CD8-positive, alpha-beta memory T cell (primary cell): ENCODE measurements at regions of chr7 and their contacts with region 1.

Region 1: DNA sequence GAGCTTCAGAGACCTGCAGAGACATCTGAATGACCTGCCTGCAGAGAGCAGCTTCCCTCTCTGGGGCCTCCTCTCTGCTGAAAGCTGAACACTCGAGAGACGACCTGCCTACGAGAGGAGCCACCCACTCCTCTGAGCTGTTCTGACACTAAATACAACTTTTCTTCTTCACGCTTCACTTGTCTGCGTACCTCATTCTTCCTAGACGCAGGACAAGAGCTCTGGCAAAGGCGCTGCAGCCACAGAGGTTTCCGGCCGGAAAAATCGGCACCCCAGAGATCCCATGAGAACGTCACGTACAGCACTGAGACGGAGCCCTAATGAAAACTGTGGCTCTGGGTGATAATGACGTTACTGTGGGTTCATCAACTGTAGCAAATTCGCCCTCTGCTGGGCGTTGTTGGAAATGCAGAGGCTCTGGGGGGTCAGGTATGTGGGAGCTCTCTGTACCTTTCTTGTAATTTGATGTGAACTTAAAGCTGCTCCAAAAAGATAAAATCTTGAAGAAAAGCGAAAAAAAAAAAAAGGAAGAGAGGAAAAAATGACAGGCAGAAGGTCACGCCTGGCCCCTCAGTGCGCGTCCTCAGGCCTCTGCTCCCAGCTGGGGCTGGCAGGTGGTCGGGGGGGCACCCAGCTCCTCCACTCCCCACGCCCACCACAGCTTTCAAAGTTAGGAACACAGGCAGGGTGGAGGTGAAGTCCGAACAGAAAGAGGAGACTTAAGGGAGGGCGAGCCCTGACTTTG is 120.7 kb downstream of the DYNC2I1 start:
- DNase-seq: peak; percentile 81 to 89 (median 84)
- H3K4me3 ChIP-seq: peak overlapping the region; percentile 82
- H3K4me3 Mint-ChIP-seq: peak overlapping the region; percentile 58 to 94 (median 87)
- H3K27ac ChIP-seq: peak overlapping the region; percentile 25
- H3K27ac Mint-ChIP-seq: peak overlapping the region; percentile 22 to 96 (median 88)
- H3K4me1 ChIP-seq: peaks cover 18% of the 10 kb centered on the region
- H3K4me1 Mint-ChIP-seq: peaks cover 15 to 26% (median 21%) of the 10 kb centered on the region in 3 donors
- H3K27me3 ChIP-seq: no peaks in the 10 kb centered on the region
- H3K27me3 Mint-ChIP-seq: no peaks in the 10 kb centered on the region

Region 2: GRCh38 chr7:158695726-158696452 is 281.1 kb before region 1 on chr7:
- CTCF ChIA-PET with region 1: interaction called, 45 read pairs
- POLR2A ChIA-PET with region 1: interaction called, 3 read pairs
- DNase-seq: peak; percentile 12 to 61 (median 33)
- H3K4me3 ChIP-seq: no peak overlapping the region
- H3K4me3 Mint-ChIP-seq: peak overlapping the region in 2 of 7 donors; percentile 44 to 82
- H3K27ac ChIP-seq: no peak overlapping the region
- H3K27ac Mint-ChIP-seq: peak overlapping the region in 5 of 8 donors; percentile 17 to 87 (median 46)
- H3K4me1 ChIP-seq: no peaks in the 10 kb centered on the region
- H3K4me1 Mint-ChIP-seq: peaks cover 3 to 24% (median 15%) of the 10 kb centered on the region in 3 donors
- H3K27me3 ChIP-seq: no peaks in the 10 kb centered on the region
- H3K27me3 Mint-ChIP-seq: no peaks in the 10 kb centered on the region

Region 3: GRCh38 chr7:158704704-158705468 is 272.1 kb before region 1 on chr7 and contains the start of gene NCAPG2:
- CTCF ChIA-PET with region 1: interaction called, 10 read pairs
- POLR2A ChIA-PET with region 1: no interaction called
- DNase-seq: peak; percentile 95 to 99 (median 97)
- H3K4me3 ChIP-seq: peak within 1 kb of the TSS; percentile 84
- H3K4me3 Mint-ChIP-seq: peak within 1 kb of the TSS; percentile 82 to 99 (median 87)
- H3K27ac ChIP-seq: peak within 1 kb of the TSS; percentile 87
- H3K27ac Mint-ChIP-seq: peak within 1 kb of the TSS; percentile 70 to 90 (median 85)
- H3K4me1 ChIP-seq: peaks cover 13% of the 10 kb centered on the region
- H3K4me1 Mint-ChIP-seq: peaks cover 18 to 32% (median 31%) of the 10 kb centered on the region in 3 donors
- H3K27me3 ChIP-seq: no peaks in the 10 kb centered on the region
- H3K27me3 Mint-ChIP-seq: peaks cover 0 to 1% of the 10 kb centered on the region in 2 donors
- total RNA-seq, gene NCAPG2: 71.4 to 75.5 TPM

Region 4: GRCh38 chr7:158863611-158864506 is 113.2 kb before region 1 on chr7:
- CTCF ChIA-PET with region 1: interaction called, 11 read pairs
- POLR2A ChIA-PET with region 1: no interaction called
- DNase-seq: peak in 3 of 5 donors; percentile 5 to 26 (median 18)
- H3K4me3 ChIP-seq: peak overlapping the region; percentile 58
- H3K4me3 Mint-ChIP-seq: peak overlapping the region; percentile 85 to 97 (median 94)
- H3K27ac ChIP-seq: peak overlapping the region; percentile 82
- H3K27ac Mint-ChIP-seq: peak overlapping the region; percentile 62 to 93 (median 90)
- H3K4me1 ChIP-seq: peaks cover 21% of the 10 kb centered on the region
- H3K4me1 Mint-ChIP-seq: peaks cover 25 to 41% (median 37%) of the 10 kb centered on the region in 3 donors
- H3K27me3 ChIP-seq: no peaks in the 10 kb centered on the region
- H3K27me3 Mint-ChIP-seq: no peaks in the 10 kb centered on the region

Region 5: GRCh38 chr7:158945519-158945918 is 31.5 kb before region 1 on chr7:
- CTCF ChIA-PET with region 1: no interaction called
- POLR2A ChIA-PET with region 1: no interaction called
- DNase-seq: no peak
- H3K4me3 ChIP-seq: no peak overlapping the region
- H3K4me3 Mint-ChIP-seq: no peak overlapping the region
- H3K27ac ChIP-seq: no peak overlapping the region
- H3K27ac Mint-ChIP-seq: no peak overlapping the region
- H3K4me1 ChIP-seq: no peaks in the 10 kb centered on the region
- H3K4me1 Mint-ChIP-seq: no peaks in the 10 kb centered on the region
- H3K27me3 ChIP-seq: no peaks in the 10 kb centered on the region
- H3K27me3 Mint-ChIP-seq: no peaks in the 10 kb centered on the region

Region 6: DNA sequence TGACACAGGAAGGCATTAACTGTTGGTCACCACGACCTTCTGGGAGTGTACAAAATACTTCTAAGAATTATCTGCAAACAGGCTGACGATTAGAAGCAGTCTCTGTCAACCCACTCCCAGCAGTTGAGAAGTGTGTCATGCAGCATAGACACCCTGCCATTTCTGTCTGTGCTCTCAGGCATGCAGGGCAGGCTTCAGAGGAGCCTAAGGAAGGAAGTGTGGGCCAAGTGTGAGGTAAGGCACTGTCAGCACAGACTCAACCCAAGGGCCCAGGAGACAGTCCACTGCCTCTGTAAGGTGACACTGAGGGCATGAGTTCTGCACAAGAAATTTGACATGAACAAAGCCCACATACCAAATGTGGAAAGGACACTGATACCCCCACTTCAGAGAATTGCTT is 276.6 kb after region 1 on chr7:
- CTCF ChIA-PET with region 1: no interaction called
- POLR2A ChIA-PET with region 1: no interaction called
- DNase-seq: peak in 1 of 5 donors; percentile 12
- H3K4me3 ChIP-seq: no peak overlapping the region
- H3K4me3 Mint-ChIP-seq: peak overlapping the region in 4 of 7 donors; percentile 4 to 37 (median 34)
- H3K27ac ChIP-seq: no peak overlapping the region
- H3K27ac Mint-ChIP-seq: peak overlapping the region in 4 of 8 donors; percentile 21 to 90 (median 68)
- H3K4me1 ChIP-seq: peaks cover 7% of the 10 kb centered on the region
- H3K4me1 Mint-ChIP-seq: peaks cover 10 to 21% (median 14%) of the 10 kb centered on the region in 3 donors
- H3K27me3 ChIP-seq: no peaks in the 10 kb centered on the region
- H3K27me3 Mint-ChIP-seq: peaks cover 4 to 14% of the 10 kb centered on the region in 2 donors